ENCODE measurements at regions of chr11 and their contacts with region 1.

Region 1: GRCh38 chr11:71977743-71978418 is 20.8 kb upstream of the IL18BP start:
- DNase-seq: peak; percentile 44 to 50
- ATAC-seq: peak; percentile 68 to 83; a peak in 4 of 6 replicates
- H3K4me3 ChIP-seq: no peak overlapping the region
- H3K27ac ChIP-seq: peak overlapping the region; percentile 35 to 52; a peak in 2 of 6 replicates
- H3K4me1 ChIP-seq: peaks cover 7% of the 10 kb centered on the region; the same call in 1 of the 3 replicates
- CTCF ChIP-seq: peak; percentile 81
- EP300 ChIP-seq: no peak
- POLR2A ChIP-seq: no peak
- RAD21 ChIP-seq: peak; percentile 67 to 73

Region 2: DNA sequence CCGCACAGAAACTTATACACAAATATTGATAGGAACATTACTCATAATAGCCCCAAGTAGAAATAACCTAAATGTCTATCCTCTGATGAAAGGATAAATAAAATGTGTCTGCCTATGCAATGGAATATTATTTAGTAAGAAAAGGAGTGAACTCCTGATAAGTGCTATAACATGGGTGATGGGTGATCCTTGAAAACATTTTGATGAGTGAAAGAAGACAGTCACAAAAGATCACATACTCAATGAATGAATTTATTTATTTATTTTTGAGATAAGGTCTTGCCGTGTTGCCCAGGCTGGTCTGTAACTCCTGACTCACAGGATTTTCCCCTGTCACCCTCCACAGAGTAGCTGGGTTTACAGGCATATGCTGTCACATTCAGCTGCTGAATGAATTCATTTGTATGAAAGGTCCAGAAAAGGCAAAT is 31.7 kb before region 1 on chr11:
- CTCF ChIA-PET with region 1: interaction called, 11 read pairs
- POLR2A ChIA-PET with region 1: interaction called, 6 read pairs
- DNase-seq: peak; percentile 53 to 77
- ATAC-seq: peak; percentile 70 to 75
- H3K4me3 ChIP-seq: no peak overlapping the region
- H3K27ac ChIP-seq: peak overlapping the region; percentile 87 to 92
- H3K4me1 ChIP-seq: peaks cover 84% of the 10 kb centered on the region
- CTCF ChIP-seq: no peak
- EP300 ChIP-seq: peak in 1 of 2 experiments; percentile 38; a peak in 1 of 5 replicates
- POLR2A ChIP-seq: no peak
- RAD21 ChIP-seq: peak; percentile 8; a peak in 1 of 5 replicates

Region 3: GRCh38 chr11:71962428-71963038 is 15.3 kb before region 1 on chr11:
- CTCF ChIA-PET with region 1: interaction called, 51 read pairs
- POLR2A ChIA-PET with region 1: no interaction called
- DNase-seq: peak in 1 of 2 experiments; percentile 38
- ATAC-seq: peak in 1 of 2 experiments; percentile 28; a peak in 2 of 6 replicates
- H3K4me3 ChIP-seq: no peak overlapping the region
- H3K27ac ChIP-seq: peak overlapping the region; percentile 81 to 83
- H3K4me1 ChIP-seq: peaks cover 52% of the 10 kb centered on the region
- CTCF ChIP-seq: no peak
- EP300 ChIP-seq: no peak
- POLR2A ChIP-seq: no peak
- RAD21 ChIP-seq: no peak

Region 4: DNA sequence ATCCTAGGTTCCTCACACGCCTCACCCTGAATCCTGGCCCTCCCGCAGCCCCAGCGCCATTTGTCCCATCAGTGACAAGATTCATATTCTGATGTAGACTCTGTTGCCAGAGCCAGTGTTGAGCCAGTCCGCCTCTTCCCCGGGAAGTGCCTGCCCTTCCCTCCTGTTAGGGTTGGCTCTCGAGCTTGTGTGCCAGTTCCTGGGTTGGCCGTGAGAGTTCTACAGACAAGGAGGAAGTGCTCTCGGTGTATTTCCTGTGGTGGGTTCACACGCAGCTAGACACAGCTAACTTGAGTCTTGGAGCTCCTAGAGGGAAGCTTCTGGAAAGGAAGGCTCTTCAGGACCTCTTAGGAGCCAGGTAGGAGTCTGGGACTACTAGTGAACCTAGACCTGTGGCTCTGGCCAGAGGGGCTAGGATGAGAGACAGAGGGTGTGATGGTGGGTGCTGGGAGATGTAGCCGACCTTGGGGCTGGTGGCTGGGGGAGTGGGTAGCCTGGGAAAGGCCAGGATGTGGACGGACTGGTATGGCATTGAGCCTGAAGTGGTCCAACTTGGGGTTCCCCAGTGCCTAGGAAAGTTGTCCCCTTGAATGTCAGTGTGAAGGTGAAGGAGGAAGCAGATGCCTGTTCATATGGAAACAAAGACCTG is 20.9 kb after region 1 on chr11 and contains the start of gene IL18BP:
- CTCF ChIA-PET with region 1: interaction called, 37 read pairs
- POLR2A ChIA-PET with region 1: no interaction called
- DNase-seq: no peak
- ATAC-seq: no peak
- H3K4me3 ChIP-seq: no peak within 1 kb of the TSS
- H3K27ac ChIP-seq: peak within 1 kb of the TSS in 1 of 2 experiments; percentile 52; a peak in 2 of 6 replicates
- H3K4me1 ChIP-seq: 0 out of 3 replicates have a peak, but pooled peaks cover 11% of the 10 kb centered on the region
- CTCF ChIP-seq: no peak
- EP300 ChIP-seq: no peak
- POLR2A ChIP-seq: no peak
- RAD21 ChIP-seq: no peak
- polyA plus RNA-seq, gene IL18BP: 7.6 and 7.7 TPM in 2 replicates

Region 5: DNA sequence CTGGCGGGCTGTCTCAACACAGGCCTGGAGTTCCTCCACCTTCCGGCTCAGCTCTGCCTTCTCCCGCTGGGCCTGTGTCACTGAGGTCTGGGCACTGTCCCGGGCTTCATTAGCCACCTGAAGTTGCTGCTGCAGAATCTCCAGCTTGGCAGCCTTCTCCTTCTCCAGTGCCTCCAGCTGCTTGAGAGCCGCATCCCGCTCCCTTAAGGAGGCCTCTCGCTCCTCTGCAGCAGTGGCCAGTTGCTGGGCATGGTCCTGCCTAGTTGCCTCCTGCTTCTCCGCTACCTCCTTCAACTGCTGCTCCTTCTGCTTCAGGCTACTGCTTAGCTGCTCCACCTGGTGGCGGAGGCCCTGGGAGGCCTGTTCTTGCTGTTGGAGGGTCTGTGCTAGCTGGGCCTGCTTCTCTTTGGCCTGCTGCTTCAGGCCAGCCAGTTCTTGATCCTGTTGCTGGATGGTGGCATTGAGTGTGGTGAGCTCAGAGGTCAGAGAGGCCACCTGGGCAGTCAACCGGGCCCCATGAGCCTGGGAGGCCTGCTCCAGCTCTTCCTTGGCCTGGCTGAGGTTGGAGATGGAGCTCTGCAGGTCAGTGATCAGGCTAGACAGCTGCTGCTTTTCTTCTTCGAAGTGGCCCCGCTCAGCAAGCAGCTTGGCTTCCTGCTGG is 37.8 kb after region 1 on chr11:
- CTCF ChIA-PET with region 1: interaction called, 45 read pairs
- POLR2A ChIA-PET with region 1: no interaction called
- DNase-seq: peak in 1 of 2 experiments; percentile 49
- ATAC-seq: peak; percentile 48 to 64; a peak in 4 of 6 replicates
- H3K4me3 ChIP-seq: no peak overlapping the region
- H3K27ac ChIP-seq: peak overlapping the region in 1 of 2 experiments; percentile 15; a peak in 1 of 6 replicates
- H3K4me1 ChIP-seq: peaks cover 30% of the 10 kb centered on the region
- CTCF ChIP-seq: peak; percentile 42; the same call in 2 of the 3 replicates
- EP300 ChIP-seq: no peak
- POLR2A ChIP-seq: no peak
- RAD21 ChIP-seq: peak; percentile 32 to 54; a peak in 4 of 5 replicates